Upper lobe of right lung (tissue), 1 donor: ENCODE measurements at regions of chr11 and their contacts with region 1.

Region 1: GRCh38 chr11:61904539-61905048 is 12.8 kb downstream of the RAB3IL1 start:
- DNase-seq: peak; percentile 76
- ATAC-seq: peak; percentile 80
- H3K4me3 ChIP-seq: no peak overlapping the region
- H3K27ac ChIP-seq: no peak overlapping the region
- H3K4me1 ChIP-seq: no peaks in the 10 kb centered on the region
- H3K27me3 ChIP-seq: no peaks in the 10 kb centered on the region
- CTCF ChIP-seq: no peak

Region 2: DNA sequence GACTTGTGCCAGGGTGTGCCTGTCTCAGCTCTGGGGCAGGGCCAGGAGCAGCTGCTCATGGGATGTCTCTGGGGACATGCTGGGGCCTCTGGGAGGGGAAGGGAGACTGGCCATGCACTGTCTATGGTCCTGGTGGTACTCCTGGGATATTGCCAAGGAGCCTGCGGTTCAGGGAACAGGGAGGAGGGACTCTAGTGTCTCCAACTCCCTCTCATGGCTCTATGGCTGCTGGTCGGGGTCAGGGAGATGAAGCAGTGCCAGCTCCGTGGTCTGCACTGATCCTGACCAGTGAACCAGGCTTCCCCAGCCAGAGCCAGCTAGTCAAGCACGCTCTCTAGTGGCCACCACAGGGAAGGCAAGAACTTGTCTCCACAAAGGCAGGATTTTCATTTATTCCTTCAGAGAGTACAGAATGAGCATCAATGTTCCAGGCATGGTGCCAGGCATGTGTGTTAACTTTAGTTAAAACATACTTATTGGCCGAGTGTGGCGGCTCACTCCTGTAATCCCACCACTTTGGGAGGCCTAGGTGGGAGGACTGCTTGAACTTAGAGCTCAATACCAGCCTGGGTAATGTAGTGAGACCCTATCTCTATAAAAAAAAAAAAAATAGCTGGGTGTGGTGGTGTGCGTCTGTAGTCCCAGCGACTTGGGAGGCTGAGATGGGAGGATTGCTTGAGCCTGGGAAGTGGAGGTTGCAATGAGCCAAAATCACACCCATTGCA is 43.1 kb after region 1 on chr11:
- intact Hi-C with region 1: loop called (anchors 5 kb)
- DNase-seq: peak; percentile 82
- ATAC-seq: peak; percentile 91
- H3K4me3 ChIP-seq: no peak overlapping the region
- H3K27ac ChIP-seq: no peak overlapping the region
- H3K4me1 ChIP-seq: peaks cover 11% of the 10 kb centered on the region
- H3K27me3 ChIP-seq: no peaks in the 10 kb centered on the region
- CTCF ChIP-seq: peak; percentile 89

Region 3: DNA sequence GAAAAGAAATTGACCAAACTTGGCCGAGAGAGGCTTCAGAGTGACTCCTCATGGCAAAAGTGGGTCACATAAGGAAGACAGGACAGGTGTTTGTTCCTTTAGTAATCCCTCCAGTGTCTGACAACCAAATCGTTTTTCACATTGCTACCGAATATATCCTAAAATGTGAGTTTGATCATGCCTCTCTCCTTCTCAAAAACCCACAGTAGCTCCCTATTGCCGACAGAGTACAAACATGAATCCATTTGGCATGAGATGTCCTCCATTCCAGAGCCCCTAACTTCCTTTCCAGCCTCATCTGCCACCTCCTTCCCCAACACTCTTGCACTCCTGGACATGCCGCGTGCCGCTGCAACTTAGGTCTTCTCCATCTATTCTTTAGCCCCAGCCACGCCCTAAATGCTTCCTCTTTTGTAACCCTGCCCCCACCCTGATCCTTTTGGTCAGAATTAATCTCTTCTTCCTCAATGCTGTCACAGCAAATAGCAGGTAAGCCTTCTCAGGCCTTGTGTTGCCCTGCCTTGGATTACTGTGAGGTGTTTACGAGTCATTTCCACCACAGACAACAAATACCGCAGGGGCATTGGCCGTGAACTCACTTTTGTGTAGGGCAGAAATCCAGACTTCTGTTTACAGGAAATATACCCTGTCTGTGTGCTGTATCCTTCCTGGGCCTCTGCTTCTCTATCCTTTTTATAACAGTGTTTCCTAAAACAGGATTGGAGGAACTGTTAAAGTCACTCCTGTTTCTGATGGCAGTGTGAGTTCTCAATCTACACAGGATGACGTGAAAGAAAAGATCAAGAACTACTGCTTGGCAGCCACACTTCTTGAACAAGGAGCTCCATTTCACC is 128.8 kb after region 1 on chr11:
- intact Hi-C with region 1: no loop called
- DNase-seq: no peak
- ATAC-seq: peak; percentile 65
- H3K4me3 ChIP-seq: no peak overlapping the region
- H3K27ac ChIP-seq: no peak overlapping the region
- H3K4me1 ChIP-seq: no peaks in the 10 kb centered on the region
- H3K27me3 ChIP-seq: no peaks in the 10 kb centered on the region
- CTCF ChIP-seq: no peak